Kidney (tissue), 22 donors: ENCODE measurements at regions of chr10 and their contacts with region 1.

Region 1: GRCh38 chr10:75401569-75402485 is at the start of gene ZNF503:
- DNase-seq: peak; percentile 99 to 100 (median 99)
- H3K4me3 ChIP-seq: peak within 1 kb of the TSS; percentile 88 to 92 (median 92)
- H3K27ac ChIP-seq: peak within 1 kb of the TSS; percentile 93 to 97
- H3K4me1 ChIP-seq: peaks cover 0 to 11% (median 2%) of the 10 kb centered on the region in 3 donors
- H3K27me3 ChIP-seq: no peaks in the 10 kb centered on the region
- CTCF ChIP-seq: peak; percentile 19
- total RNA-seq, gene ZNF503: 34.7 TPM

Region 2: DNA sequence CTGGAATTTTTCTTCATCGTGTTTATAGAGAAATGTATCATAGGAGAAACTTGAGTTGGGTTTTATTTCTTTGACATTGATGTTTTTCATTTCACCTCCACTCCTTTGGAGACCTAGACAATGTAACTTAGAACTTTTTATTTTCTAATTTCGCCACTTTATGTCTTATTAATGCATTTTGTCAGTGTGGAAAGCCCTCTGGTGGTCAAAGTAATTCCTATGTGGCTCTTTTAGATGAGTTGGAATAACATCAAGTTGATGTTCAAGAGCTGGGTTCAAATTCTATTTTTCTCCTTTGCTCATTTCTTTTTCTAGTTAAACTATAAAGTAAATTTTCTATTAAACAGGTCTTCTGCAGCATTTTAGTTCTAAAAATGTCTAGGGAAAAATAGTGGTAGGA is 508.2 kb after region 1 on chr10:
- intact Hi-C with region 1: loop called (anchors 10 kb)
- DNase-seq: peak in 1 of 5 donors; percentile 60
- H3K4me3 ChIP-seq: no peak overlapping the region
- H3K27ac ChIP-seq: no peak overlapping the region
- H3K4me1 ChIP-seq: no peaks in the 10 kb centered on the region
- H3K27me3 ChIP-seq: no peaks in the 10 kb centered on the region
- CTCF ChIP-seq: peak; percentile 41

Region 3: DNA sequence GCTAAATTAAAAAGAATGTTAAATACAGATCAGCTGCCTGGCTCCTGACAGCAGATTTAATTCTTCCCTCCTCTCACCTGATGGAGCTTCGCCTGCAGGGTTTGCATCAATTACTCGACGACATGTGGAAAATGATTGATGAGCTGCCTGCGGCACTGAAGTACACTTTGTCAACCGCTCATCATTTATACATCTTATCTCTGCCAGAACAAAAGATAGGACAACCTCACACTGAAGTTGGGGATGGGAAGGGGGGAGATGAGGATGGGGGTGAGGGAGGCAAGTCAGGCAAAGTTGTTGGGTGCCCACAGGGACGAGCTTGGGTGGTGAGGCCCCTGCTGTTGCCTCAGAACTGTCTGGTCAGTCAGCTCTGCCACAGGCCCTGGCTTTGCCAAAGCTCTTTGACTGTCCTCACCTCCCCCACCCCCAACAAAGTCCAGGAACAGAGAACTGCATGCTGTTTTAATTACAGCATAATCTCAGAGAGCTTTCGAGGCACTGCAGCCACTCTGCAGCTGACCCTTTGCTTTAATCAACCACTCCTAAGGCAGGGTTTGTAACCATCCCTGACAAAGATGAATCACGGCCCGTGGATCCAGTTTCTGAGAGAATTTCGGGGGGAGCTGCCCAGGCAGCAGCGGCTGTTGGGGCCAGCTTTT is 731.9 kb after region 1 on chr10:
- intact Hi-C with region 1: no loop called
- DNase-seq: peak in 4 of 5 donors; percentile 52 to 67 (median 54)
- H3K4me3 ChIP-seq: no peak overlapping the region
- H3K27ac ChIP-seq: no peak overlapping the region
- H3K4me1 ChIP-seq: peaks cover 0 to 6% (median 5%) of the 10 kb centered on the region in 3 donors
- H3K27me3 ChIP-seq: no peaks in the 10 kb centered on the region
- CTCF ChIP-seq: no peak

Region 4: DNA sequence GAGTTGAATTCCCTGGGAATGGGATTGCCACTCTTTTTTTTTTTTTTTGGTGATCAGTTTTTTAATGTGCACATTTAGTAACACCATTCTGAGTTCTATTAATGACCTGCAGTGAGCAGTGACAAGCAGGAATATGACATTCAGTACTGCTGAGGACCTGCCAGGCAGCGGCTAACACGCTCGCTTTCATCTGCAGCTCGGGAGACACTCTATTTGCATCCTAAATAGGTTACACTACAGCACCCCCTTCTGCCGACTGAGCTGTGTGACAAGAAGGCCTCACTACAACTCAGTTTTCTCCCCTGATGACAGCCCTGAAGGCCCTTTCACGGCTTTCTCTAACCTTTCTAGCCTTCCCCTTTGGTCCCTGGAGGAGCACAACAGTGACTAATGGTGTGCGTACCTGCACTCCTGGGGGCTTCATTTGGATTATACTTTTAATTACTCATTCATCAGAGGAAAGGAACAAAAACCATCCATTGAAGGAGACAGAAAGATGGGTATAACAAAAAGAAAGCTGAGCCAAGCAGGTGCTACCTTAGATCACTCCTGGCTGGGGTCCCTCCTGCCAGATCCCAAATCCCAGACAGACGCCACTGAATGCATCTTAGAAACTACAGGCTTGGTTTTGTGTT is 902.0 kb after region 1 on chr10:
- intact Hi-C with region 1: loop called (anchors 10 kb)
- DNase-seq: peak; percentile 81 to 96 (median 90)
- H3K4me3 ChIP-seq: peak overlapping the region in 1 of 3 donors; percentile 36
- H3K27ac ChIP-seq: peak overlapping the region in 1 of 2 donors; percentile 73
- H3K4me1 ChIP-seq: peaks cover 14 to 42% (median 17%) of the 10 kb centered on the region in 3 donors
- H3K27me3 ChIP-seq: no peaks in the 10 kb centered on the region
- CTCF ChIP-seq: peak; percentile 77